ENCODE measurements at regions of chr7 and their contacts with region 1.

Region 1: DNA sequence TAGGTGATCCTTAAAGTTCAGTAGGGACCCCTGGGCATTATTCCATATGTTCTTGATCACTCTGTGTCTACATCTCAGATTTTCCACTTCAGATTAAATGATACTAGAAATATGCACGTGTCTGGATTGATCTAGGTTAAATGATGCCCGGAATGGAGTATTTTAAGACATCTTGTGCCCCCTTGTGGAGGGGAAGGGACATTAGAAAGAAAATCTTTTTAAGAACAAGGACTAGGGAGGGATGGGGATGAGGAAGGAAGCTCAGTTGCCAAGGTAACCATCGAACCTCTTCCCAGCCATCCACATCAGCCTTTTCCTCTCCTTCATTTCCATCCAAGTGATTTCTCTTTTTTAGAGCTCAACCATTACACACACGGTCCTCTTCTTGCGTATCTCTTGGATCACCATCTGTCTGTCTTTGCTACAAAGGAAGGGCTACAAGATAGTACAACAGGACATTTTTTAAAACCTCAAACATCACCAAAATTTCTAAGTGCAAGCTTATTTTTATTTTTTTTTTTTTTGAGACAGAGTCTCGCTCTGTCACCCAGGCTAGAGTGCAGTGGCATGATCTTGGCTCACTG is 40.5 kb downstream of the PRSS2 start:
- DNase-seq: peak; percentile 29
- H3K4me3 Mint-ChIP-seq: peak overlapping the region; percentile 62
- H3K27ac Mint-ChIP-seq: peak overlapping the region; percentile 100
- H3K4me1 Mint-ChIP-seq: peaks cover 76% of the 10 kb centered on the region
- H3K27me3 Mint-ChIP-seq: no peaks in the 10 kb centered on the region

Region 2: DNA sequence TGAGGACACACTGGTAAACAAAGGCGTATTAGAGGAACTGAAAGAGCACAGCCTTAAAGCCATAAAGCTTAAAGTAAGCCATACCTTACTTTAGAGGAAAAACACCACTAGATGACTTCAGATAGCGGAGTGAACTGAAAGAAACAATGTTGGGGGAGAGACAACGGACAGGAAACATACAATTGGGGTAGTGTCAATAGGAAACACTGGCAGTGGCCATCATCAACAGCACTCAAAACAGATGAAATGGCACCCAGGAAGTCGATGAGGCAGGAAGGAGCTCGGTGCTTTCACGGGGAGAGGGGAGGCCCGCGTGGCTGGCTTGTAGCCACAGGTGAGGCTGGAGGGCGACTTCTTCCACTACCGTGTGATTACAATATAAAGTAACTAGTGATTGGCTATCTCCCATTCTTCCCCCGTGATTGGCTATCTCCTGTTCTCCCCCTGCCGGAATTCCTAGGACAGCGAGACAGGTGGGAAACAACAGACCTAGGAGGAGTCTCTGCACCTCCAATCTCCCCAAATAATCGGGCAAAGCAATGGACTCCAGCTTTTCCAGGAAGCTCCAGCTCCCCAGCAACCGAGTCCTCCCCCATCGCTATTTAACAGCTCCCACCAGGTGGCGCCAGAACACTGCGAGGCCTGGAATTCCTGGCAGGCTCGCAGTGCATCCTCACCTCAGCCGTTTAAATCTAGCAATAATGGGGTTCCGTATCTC is 835.3 kb before region 1 on chr7:
- CTCF ChIA-PET with region 1: no interaction called
- POLR2A ChIA-PET with region 1: no interaction called
- intact Hi-C with region 1: loop called (anchors 10 kb)
- DNase-seq: peak; percentile 80
- H3K4me3 Mint-ChIP-seq: peak overlapping the region; percentile 70
- H3K27ac Mint-ChIP-seq: no peak overlapping the region
- H3K4me1 Mint-ChIP-seq: peaks cover 5% of the 10 kb centered on the region
- H3K27me3 Mint-ChIP-seq: no peaks in the 10 kb centered on the region

Region 3: GRCh38 chr7:142385491-142386340 is 425.5 kb before region 1 on chr7:
- CTCF ChIA-PET with region 1: no interaction called
- POLR2A ChIA-PET with region 1: interaction called, 4 read pairs
- intact Hi-C with region 1: loop called (anchors 2 kb)
- DNase-seq: peak; percentile 69
- H3K4me3 Mint-ChIP-seq: peak overlapping the region; percentile 60
- H3K27ac Mint-ChIP-seq: peak overlapping the region; percentile 50
- H3K4me1 Mint-ChIP-seq: peaks cover 21% of the 10 kb centered on the region
- H3K27me3 Mint-ChIP-seq: no peaks in the 10 kb centered on the region

Region 4: GRCh38 chr7:142557971-142558582 is 253.2 kb before region 1 on chr7:
- CTCF ChIA-PET with region 1: interaction called, 10 read pairs
- POLR2A ChIA-PET with region 1: no interaction called
- intact Hi-C with region 1: loop called (anchors 2 kb)
- DNase-seq: peak; percentile 65
- H3K4me3 Mint-ChIP-seq: peak overlapping the region; percentile 28
- H3K27ac Mint-ChIP-seq: peak overlapping the region; percentile 35
- H3K4me1 Mint-ChIP-seq: peaks cover 5% of the 10 kb centered on the region
- H3K27me3 Mint-ChIP-seq: peaks cover 3% of the 10 kb centered on the region

Region 5: DNA sequence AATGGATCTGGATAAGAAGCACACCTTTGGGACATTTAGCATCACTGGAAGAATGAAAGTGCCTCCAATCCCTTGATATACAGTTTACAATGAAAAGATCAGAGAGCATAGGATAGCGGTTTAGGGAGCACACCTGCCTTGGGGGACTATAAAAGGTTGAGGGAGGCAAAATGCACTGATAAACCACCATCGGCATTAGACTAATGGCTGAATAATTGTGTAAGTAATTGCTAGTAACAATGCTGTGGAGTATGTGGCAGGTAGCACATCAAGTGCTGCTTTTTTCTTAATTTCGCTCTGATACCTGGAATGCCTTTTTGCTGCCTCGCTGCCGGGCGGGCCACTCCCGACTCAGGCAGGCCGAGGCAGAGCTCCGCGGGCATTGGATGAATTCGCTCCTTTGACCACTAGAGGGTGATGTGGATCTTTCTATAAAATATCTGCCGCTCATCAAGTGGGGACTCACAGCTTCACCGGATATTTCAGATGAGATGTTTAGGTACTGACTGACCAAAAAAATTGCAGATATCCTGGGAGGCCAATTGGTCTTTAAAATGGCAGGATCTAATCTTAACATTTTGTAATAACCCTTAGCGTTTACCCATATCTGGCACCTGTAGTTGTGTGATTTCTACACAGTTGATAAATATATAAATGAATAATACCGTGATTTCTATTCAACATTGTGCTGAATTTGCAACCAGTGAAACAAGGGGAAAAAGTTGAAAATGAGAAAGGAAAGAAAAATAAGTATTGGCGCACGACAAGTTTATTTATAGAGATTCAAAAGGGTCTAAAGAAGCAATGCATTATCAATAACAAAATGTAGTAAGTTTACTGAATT is 178.7 kb before region 1 on chr7:
- CTCF ChIA-PET with region 1: interaction called, 71 read pairs
- POLR2A ChIA-PET with region 1: interaction called, 26 read pairs
- intact Hi-C with region 1: loop called (anchors 1 kb)
- DNase-seq: peak; percentile 66
- H3K4me3 Mint-ChIP-seq: no peak overlapping the region
- H3K27ac Mint-ChIP-seq: no peak overlapping the region
- H3K4me1 Mint-ChIP-seq: peaks cover 3% of the 10 kb centered on the region
- H3K27me3 Mint-ChIP-seq: no peaks in the 10 kb centered on the region

Region 6: GRCh38 chr7:142796608-142797385 is 14.4 kb before region 1 on chr7:
- CTCF ChIA-PET with region 1: interaction called, 390 read pairs
- POLR2A ChIA-PET with region 1: interaction called, 517 read pairs
- intact Hi-C with region 1: loop called (anchors 1 kb)
- DNase-seq: no peak
- H3K4me3 Mint-ChIP-seq: peak overlapping the region; percentile 100
- H3K27ac Mint-ChIP-seq: peak overlapping the region; percentile 100
- H3K4me1 Mint-ChIP-seq: peaks cover 62% of the 10 kb centered on the region
- H3K27me3 Mint-ChIP-seq: no peaks in the 10 kb centered on the region

Region 7: GRCh38 chr7:143287935-143288826 is 476.9 kb after region 1 on chr7 and contains the start of gene CASP2:
- CTCF ChIA-PET with region 1: no interaction called
- POLR2A ChIA-PET with region 1: interaction called, 4 read pairs
- intact Hi-C with region 1: loop called (anchors 1 kb)
- DNase-seq: peak; percentile 99
- H3K4me3 Mint-ChIP-seq: peak within 1 kb of the TSS; percentile 93
- H3K27ac Mint-ChIP-seq: peak within 1 kb of the TSS; percentile 97
- H3K4me1 Mint-ChIP-seq: peaks cover 44% of the 10 kb centered on the region
- H3K27me3 Mint-ChIP-seq: no peaks in the 10 kb centered on the region
- total RNA-seq, gene CASP2: 117 to 129 TPM

Measured in activated CD4-positive, alpha-beta memory T cell treated with anti-CD3 and anti-CD28 coated beads for 36 hours (primary cell).